ENCODE measurements at regions of chr7 and their contacts with region 1.

Region 1: DNA sequence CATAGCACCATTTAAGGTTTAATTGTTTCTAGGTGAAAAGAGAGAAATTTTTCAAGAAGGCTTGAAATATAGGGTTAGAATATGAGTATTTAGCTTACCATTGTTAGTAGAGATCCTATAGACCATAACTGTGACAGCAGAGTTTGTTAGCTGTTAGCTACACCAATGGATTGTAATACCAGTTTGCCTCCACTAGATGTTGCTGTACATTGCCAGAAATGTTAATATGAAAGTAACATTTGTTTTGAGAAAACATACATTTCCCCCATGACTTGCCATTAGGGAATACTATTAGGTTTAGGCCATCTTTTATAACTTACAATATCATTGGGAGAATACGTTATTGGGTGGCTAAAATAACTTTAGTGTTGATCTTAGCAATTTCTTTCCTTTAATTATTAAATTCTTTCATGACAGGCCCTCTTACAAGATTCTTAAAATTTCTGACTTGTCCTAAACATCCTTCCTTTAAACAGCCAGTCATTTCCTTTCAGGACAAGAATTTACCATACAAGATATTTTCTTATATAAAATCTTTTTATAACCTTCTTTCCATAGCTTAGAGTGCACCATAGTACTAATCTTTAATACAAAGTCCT is 39.5 kb downstream of the ZNF117 start:
- DNase-seq: peak; percentile 74
- ATAC-seq: peak; percentile 68
- H3K4me3 ChIP-seq: no peak overlapping the region
- H3K27ac ChIP-seq: no peak overlapping the region
- H3K4me1 ChIP-seq: no peaks in the 10 kb centered on the region
- H3K27me3 ChIP-seq: peaks cover 12% of the 10 kb centered on the region
- CTCF ChIP-seq: peak; percentile 85

Region 2: DNA sequence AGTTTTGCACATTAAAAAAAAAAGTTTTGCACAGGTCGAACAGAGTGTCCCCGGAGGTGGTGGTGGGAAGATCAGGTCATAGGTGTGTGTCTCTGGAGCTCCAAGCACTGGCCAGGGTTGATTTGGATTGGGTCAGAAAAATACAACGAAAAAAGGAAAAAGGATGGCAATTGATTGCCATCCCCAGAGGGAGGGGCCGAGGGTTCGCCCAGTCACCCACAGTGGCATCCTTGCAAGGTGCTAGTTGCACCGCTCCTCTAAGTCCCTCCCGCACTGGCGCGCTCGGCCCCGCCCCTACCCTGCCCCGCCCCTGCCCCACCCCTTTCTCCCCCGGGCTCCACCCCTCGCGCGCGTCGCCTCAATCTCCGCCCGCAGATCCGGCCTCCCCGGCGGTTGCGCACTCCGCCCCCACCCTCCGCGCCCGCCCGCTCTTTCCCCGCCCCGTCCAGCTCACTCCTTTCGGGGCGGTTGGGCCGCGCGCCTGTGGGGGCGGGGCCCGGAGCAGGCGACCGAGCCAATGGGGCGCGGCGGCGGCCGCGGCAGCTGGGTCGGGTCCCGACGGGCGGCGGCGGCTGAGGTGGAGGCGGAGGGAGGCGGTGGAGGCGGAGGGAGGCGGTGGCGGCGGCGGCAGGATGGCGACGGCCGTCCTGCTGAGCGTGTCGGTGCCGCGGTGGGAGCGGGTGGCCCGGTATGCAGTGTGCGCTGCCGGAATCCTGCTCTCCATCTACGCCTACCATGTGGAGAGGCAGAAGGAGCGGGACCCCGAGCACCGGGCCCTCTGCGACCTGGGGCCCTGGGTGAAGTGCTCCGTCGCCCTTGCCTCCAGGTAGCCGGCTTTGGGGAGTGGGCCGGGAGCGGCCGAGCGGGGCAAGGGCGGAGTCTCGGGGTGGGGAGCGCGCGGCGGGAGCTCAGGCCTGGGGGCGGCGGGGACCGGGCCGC is 86.7 kb after region 1 on chr7:
- CTCF ChIA-PET with region 1: no interaction called
- POLR2A ChIA-PET with region 1: no interaction called
- intact Hi-C with region 1: loop called (anchors 2 kb)
- DNase-seq: peak; percentile 90
- ATAC-seq: peak; percentile 83
- H3K4me3 ChIP-seq: peak overlapping the region; percentile 73
- H3K27ac ChIP-seq: peak overlapping the region; percentile 26; the same call in 1 of the 2 replicates
- H3K4me1 ChIP-seq: 0 out of 2 replicates have a peak, but pooled peaks cover 9% of the 10 kb centered on the region
- H3K27me3 ChIP-seq: no peaks in the 10 kb centered on the region
- CTCF ChIP-seq: no peak

Region 3: DNA sequence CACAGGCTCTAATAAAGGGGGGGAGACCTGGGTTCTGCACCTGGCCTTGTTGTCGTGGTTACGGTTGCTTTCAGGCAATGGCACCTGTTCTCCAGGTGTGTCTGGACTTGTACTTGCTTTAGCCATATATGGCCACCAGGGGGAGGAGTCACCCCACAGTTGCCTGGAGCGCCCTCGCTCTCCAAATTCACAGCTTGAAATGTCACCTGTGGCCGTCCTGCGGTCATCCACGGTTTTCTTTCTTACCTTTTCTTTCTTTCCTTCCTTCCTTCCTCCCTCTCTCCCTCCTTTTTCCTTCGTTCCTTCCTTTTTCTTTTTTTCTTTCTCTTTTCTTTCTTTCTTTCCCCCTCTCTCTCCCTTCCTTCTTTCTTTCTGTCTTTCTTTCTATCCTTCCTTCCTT is 265.1 kb after region 1 on chr7:
- CTCF ChIA-PET with region 1: no interaction called
- POLR2A ChIA-PET with region 1: no interaction called
- intact Hi-C with region 1: loop called (anchors 1 kb)
- DNase-seq: peak; percentile 65
- ATAC-seq: peak; percentile 43
- H3K4me3 ChIP-seq: no peak overlapping the region
- H3K27ac ChIP-seq: no peak overlapping the region
- H3K4me1 ChIP-seq: no peaks in the 10 kb centered on the region
- H3K27me3 ChIP-seq: no peaks in the 10 kb centered on the region
- CTCF ChIP-seq: peak; percentile 70

Region 4: DNA sequence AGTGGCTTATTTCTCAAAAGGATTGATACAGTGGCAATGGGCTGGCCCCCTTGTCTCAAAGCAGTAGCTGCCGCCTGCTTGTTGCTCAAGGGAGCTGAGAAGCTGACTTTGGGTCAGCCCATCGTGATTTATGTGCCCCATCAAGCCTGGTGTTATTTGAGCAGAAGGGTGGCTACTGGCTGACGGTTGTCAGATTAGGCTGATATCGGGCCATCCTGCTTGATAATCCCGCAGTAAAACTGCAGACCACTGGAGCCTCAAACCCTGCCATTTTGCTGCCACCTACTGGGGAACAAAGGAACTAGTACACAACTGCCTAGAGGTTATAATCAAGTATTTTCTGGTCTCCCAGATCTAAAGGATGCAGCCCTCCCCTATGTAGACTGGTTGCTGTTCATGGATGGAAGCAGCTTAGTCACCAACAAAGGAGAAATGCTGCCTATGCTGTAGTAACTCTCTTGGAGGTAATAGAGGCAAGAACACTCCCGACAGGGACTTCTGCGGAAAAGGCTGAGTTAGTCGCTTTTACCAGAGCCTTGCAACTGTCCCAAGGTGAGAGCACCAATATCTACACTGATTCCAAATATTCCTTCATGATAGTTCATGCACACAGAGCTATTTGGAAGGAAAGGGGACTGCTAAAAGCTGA is 356.4 kb after region 1 on chr7:
- CTCF ChIA-PET with region 1: no interaction called
- POLR2A ChIA-PET with region 1: no interaction called
- intact Hi-C with region 1: loop called (anchors 2 kb)
- DNase-seq: peak; percentile 56
- ATAC-seq: peak; percentile 91
- H3K4me3 ChIP-seq: no peak overlapping the region
- H3K27ac ChIP-seq: no peak overlapping the region
- H3K4me1 ChIP-seq: no peaks in the 10 kb centered on the region
- H3K27me3 ChIP-seq: no peaks in the 10 kb centered on the region; the same call in 1 of the 2 replicates
- CTCF ChIP-seq: peak; percentile 89

Region 5: GRCh38 chr7:65475734-65476319 is 524.5 kb after region 1 on chr7:
- CTCF ChIA-PET with region 1: no interaction called
- POLR2A ChIA-PET with region 1: no interaction called
- intact Hi-C with region 1: loop called (anchors 10 kb)
- DNase-seq: peak; percentile 70
- ATAC-seq: peak; percentile 80
- H3K4me3 ChIP-seq: no peak overlapping the region
- H3K27ac ChIP-seq: peak overlapping the region; percentile 16
- H3K4me1 ChIP-seq: peaks cover 18% of the 10 kb centered on the region
- H3K27me3 ChIP-seq: no peaks in the 10 kb centered on the region
- CTCF ChIP-seq: no peak